Endothelial cell of umbilical vein (primary cell): ENCODE measurements at regions of chr2 and their contacts with region 1.

Region 1: DNA sequence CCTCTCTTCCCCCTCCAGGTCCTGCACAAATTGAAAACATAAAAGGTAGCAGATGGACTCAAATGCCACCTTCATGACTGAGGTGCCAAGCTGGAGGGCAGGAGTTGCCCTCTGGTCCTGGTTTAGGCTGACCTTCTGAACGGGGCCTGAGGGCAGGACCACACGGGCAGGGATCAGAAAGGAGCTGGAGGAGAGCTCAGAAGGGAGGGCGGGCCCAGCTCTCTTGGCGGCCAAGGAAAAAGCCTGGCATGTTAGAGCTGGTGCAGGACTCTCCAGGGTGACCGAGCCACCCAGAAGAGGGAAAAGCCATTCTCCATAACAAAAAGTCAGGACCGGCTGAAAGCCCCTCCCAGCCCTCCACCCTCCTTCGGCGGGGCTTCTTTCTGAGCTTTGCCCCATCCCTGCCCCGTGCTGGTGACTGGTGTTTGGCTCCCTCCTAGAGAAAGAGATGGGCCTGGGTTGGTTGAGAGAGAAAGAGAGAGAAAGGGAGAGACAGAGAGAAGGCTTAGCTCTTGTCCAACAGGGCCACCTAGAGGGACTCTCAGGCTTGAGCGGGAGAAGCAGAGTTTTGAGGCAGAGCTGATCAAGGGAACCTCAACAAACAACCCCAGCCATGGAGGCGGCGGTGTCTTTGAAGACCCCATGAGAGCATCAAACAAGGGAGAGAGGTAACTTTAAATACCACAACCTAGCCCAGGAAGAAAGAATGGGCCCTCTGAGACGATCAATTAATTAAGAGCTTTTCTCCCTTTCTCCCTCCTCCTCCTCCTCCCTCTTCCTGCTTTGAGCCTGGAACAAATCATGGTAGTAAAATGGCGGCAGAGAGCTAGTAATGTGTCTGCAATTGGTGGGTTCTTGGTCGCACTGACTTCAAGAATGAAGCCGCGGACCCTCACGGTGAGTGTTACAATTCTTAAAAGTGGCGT is 50.8 kb downstream of the WIPF1 start:
- DNase-seq: peak; percentile 17
- H3K4me3 ChIP-seq: no peak overlapping the region
- H3K27ac ChIP-seq: no peak overlapping the region
- H3K4me1 ChIP-seq: no peaks in the 10 kb centered on the region
- H3K27me3 ChIP-seq: peaks cover 2 to 15% of the 10 kb centered on the region in 2 experiments
- CTCF ChIP-seq: peak; percentile 19 to 36
- POLR2A ChIP-seq: no peak

Region 2: GRCh38 chr2:174535821-174536220 is 11.0 kb before region 1 on chr2:
- CTCF ChIA-PET with region 1: interaction called, 11 read pairs
- POLR2A ChIA-PET with region 1: no interaction called
- dilution Hi-C with region 1: no loop called
- intact Hi-C with region 1: no loop called
- DNase-seq: no peak
- H3K4me3 ChIP-seq: no peak overlapping the region
- H3K27ac ChIP-seq: no peak overlapping the region
- H3K4me1 ChIP-seq: no peaks in the 10 kb centered on the region
- H3K27me3 ChIP-seq: peaks cover 0 to 4% of the 10 kb centered on the region in 2 experiments
- CTCF ChIP-seq: no peak
- POLR2A ChIP-seq: no peak

Region 3: DNA sequence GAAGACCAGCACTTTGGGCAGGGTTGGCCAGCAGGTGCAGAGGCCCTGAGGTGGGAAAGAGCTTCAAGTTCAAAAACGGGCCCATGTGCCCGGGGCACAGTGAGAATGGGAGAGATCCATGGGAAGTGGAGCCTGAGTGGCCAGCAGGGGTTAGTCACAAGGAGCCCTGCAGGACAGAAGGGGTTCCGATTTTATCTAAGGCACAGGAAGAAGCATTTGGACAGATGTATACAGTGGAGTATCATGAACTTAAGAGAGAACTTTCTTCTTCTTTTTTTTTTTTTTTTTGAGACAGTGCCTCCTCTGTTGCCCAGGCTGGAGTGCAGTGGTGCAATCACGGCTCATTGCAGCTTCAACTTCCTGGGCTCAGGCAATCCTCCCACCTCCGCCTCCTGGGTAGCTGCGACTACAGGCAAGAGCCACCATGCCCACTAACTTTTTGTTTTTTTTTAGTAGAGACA is 26.8 kb after region 1 on chr2:
- CTCF ChIA-PET with region 1: no interaction called
- POLR2A ChIA-PET with region 1: no interaction called
- dilution Hi-C with region 1: no loop called
- intact Hi-C with region 1: no loop called
- DNase-seq: no peak
- H3K4me3 ChIP-seq: no peak overlapping the region
- H3K27ac ChIP-seq: no peak overlapping the region
- H3K4me1 ChIP-seq: no peaks in the 10 kb centered on the region
- H3K27me3 ChIP-seq: no peaks in the 10 kb centered on the region
- CTCF ChIP-seq: no peak
- POLR2A ChIP-seq: no peak

Region 4: DNA sequence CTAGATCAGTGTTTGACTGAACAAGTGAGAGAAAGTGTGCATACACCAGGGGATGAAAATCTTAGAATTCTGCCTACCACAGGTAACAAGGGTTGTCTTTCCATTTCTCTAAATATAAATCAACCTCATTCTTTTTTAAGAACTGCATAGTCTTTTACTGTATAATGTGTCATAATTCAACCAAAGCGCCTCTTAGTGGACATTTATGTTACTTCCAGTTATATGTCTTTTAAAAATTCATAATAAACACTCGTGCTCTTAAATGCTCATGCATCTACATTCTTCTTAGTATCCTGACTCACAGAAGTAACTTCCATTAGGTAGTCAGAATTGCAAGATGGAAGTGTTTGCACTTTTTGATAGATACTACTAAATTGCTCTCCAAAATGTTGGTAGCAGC is 141.2 kb after region 1 on chr2:
- CTCF ChIA-PET with region 1: interaction called, 10 read pairs
- POLR2A ChIA-PET with region 1: no interaction called
- dilution Hi-C with region 1: no loop called
- intact Hi-C with region 1: no loop called
- DNase-seq: peak; percentile 53
- H3K4me3 ChIP-seq: no peak overlapping the region
- H3K27ac ChIP-seq: no peak overlapping the region
- H3K4me1 ChIP-seq: peaks cover 8% of the 10 kb centered on the region
- H3K27me3 ChIP-seq: peaks cover 3 to 10% of the 10 kb centered on the region in 2 experiments
- CTCF ChIP-seq: peak in 1 of 2 donors; percentile 15
- POLR2A ChIP-seq: no peak